HepG2 (cell line): ENCODE measurements at regions of chr9 and their contacts with region 1.

Region 1: GRCh38 chr9:113591001-113591898 is 127.7 kb downstream of the RGS3 start:
- DNase-seq: peak; percentile 59
- ATAC-seq: peak; percentile 71
- H3K4me3 ChIP-seq: no peak overlapping the region
- H3K27ac ChIP-seq: no peak overlapping the region
- H3K4me1 ChIP-seq: peaks cover 32% of the 10 kb centered on the region
- H3K27me3 ChIP-seq: no peaks in the 10 kb centered on the region
- CTCF ChIP-seq: peak; percentile 96
- EP300 ChIP-seq: no peak
- POLR2A ChIP-seq: no peak
- RAD21 ChIP-seq: peak; percentile 98

Region 2: GRCh38 chr9:113446323-113446740 is 144.9 kb before region 1 on chr9:
- CTCF ChIA-PET with region 1: interaction called, 8 read pairs
- POLR2A ChIA-PET with region 1: interaction called, 3 read pairs
- in situ Hi-C with region 1: loop called (anchors 5 kb)
- intact Hi-C with region 1: loop called (anchors 2 kb)
- DNase-seq: peak; percentile 47
- ATAC-seq: peak; percentile 43
- H3K4me3 ChIP-seq: no peak overlapping the region
- H3K27ac ChIP-seq: no peak overlapping the region
- H3K4me1 ChIP-seq: peaks cover 22% of the 10 kb centered on the region
- H3K27me3 ChIP-seq: no peaks in the 10 kb centered on the region
- CTCF ChIP-seq: peak; percentile 66
- EP300 ChIP-seq: no peak
- POLR2A ChIP-seq: no peak
- RAD21 ChIP-seq: peak; percentile 73

Region 3: DNA sequence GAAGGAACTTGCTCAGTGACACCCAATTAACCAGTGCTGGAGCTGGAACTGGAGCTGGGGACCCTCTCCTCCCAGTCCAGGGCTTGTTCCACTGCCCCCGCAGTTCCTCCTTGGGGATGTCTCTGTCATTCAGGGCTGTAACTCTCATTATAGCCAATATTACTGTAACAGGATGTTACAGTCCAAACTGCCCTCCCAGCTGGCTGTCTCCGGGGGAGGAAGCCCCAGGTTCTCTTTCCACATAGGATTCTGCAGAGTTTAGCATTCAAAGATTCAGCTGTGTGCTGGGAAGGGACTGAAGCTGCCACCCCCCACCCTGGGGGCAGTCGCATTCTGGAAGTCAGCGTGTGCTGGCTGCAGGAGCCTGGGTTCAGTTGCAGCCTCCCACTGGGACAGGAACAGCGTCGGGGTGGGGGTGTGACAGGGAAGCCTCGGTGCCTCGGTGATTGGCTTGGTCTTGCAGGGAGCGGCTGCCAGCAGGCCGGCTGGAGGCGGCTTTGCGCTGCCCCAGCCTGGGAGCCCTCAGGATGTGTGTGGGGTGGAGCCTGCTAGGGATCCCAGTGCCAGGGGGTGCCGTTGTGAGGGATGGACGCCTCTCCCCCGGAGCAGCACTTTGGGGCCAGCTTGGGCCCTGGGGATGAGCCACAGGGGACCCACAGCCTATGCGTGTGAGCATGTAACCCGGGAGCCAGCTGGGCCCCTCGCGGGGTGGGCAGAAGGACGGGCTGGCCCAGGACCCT is 26.6 kb before region 1 on chr9:
- CTCF ChIA-PET with region 1: no interaction called
- POLR2A ChIA-PET with region 1: no interaction called
- in situ Hi-C with region 1: no loop called
- intact Hi-C with region 1: no loop called
- DNase-seq: no peak
- ATAC-seq: peak; percentile 13
- H3K4me3 ChIP-seq: peak overlapping the region in 1 of 3 experiments; percentile 49; a peak in 2 of 6 replicates
- H3K27ac ChIP-seq: no peak overlapping the region
- H3K4me1 ChIP-seq: peaks cover 48% of the 10 kb centered on the region
- H3K27me3 ChIP-seq: no peaks in the 10 kb centered on the region
- CTCF ChIP-seq: no peak
- EP300 ChIP-seq: no peak
- POLR2A ChIP-seq: no peak
- RAD21 ChIP-seq: no peak